GM12878 (cell line): ENCODE measurements at regions of chr9 and their contacts with region 1.

Region 1: GRCh38 chr9:4489919-4490704 is at the start of gene SLC1A1:
- DNase-seq: peak; percentile 55
- ATAC-seq: peak; percentile 76
- H3K4me3 ChIP-seq: peak within 1 kb of the TSS; percentile 99
- H3K27ac ChIP-seq: peak within 1 kb of the TSS; percentile 73
- H3K4me1 ChIP-seq: peaks cover 14% of the 10 kb centered on the region; the same call in 1 of the 2 replicates
- H3K27me3 ChIP-seq: no peaks in the 10 kb centered on the region
- CTCF ChIP-seq: no peak
- EP300 ChIP-seq: 0 out of 4 replicates have a peak, but pooled peaks of 1 of the 2 experiments have one; percentile 14
- POLR2A ChIP-seq: peak; percentile 66
- RAD21 ChIP-seq: 0 out of 2 replicates have a peak, but pooled peaks have one; percentile 7
- polyA plus RNA-seq, gene SLC1A1: 7.3 to 8.7 TPM

Region 2: DNA sequence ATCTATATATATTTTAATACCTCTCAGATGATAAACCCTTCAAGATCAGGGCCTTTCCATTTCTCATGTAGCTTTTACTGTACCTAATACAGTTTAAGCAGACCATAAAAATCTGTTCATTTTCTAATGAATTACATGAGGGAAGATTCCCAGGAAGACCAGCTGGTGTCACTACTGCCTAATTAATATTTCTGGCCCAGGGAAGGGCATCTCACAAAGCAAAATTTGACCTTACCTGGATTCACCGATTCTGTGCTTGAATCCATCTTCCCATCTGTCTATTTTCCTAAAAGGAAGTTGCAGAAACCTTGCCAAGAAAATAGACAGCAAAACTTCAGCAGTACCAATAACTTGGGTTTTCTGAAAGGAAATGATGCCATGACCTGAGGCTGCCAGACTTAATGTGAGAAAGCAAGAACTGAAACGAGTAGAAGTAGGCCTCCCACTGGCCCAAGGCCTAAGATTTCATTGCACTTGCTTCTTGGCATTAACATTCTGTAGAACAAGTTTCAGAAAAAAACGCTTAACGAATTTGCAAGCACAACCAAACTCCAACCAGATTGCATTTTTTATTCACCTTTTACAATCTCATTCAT is 107.3 kb before region 1 on chr9:
- CTCF ChIA-PET with region 1: interaction called, 7 read pairs
- POLR2A ChIA-PET with region 1: no interaction called
- RAD21 ChIA-PET with region 1: no interaction called
- SMC1A ChIA-PET with region 1: interaction called, 3 read pairs
- in situ Hi-C with region 1: no loop called
- intact Hi-C with region 1: loop called (anchors 2 kb)
- DNase-seq: peak; percentile 40
- ATAC-seq: peak; percentile 87
- H3K4me3 ChIP-seq: no peak overlapping the region
- H3K27ac ChIP-seq: no peak overlapping the region
- H3K4me1 ChIP-seq: peaks cover 5% of the 10 kb centered on the region; the same call in 1 of the 2 replicates
- H3K27me3 ChIP-seq: no peaks in the 10 kb centered on the region
- CTCF ChIP-seq: peak; percentile 51 to 73 (median 58); a peak in 5 of 6 replicates
- EP300 ChIP-seq: no peak
- POLR2A ChIP-seq: no peak
- RAD21 ChIP-seq: peak; percentile 87

Region 3: DNA sequence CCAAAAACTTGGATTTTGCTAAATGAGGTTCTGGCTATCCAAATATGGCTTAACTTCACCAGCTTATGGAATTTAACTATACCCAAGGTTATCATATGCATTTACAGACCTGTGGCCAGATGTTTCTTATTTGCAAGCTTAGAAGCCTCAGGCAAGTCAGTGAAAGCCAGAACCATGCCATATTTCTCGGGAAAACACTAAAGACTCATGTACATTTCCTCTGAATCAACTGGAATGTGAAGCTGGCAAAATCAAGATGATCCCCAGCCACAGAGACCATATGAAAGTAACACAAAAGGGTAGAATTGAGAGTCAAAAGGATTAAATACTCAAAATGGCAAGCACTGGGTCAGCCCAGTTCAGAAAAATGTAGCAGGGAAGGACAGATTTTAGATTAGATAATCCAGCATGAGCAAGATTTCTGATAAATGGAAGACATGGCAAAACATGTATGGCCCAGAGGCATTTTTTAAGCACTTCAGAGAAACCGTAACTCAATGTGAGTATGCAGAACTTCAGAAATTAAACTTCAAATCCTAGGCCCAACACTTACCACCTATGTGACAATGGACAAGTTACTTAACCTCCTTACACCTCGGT is 76.2 kb before region 1 on chr9:
- CTCF ChIA-PET with region 1: no interaction called
- POLR2A ChIA-PET with region 1: no interaction called
- RAD21 ChIA-PET with region 1: no interaction called
- SMC1A ChIA-PET with region 1: no interaction called
- in situ Hi-C with region 1: no loop called
- intact Hi-C with region 1: no loop called
- DNase-seq: no peak
- ATAC-seq: no peak
- H3K4me3 ChIP-seq: no peak overlapping the region
- H3K27ac ChIP-seq: no peak overlapping the region
- H3K4me1 ChIP-seq: no peaks in the 10 kb centered on the region
- H3K27me3 ChIP-seq: no peaks in the 10 kb centered on the region
- CTCF ChIP-seq: no peak
- EP300 ChIP-seq: no peak
- POLR2A ChIP-seq: no peak
- RAD21 ChIP-seq: no peak

Region 4: DNA sequence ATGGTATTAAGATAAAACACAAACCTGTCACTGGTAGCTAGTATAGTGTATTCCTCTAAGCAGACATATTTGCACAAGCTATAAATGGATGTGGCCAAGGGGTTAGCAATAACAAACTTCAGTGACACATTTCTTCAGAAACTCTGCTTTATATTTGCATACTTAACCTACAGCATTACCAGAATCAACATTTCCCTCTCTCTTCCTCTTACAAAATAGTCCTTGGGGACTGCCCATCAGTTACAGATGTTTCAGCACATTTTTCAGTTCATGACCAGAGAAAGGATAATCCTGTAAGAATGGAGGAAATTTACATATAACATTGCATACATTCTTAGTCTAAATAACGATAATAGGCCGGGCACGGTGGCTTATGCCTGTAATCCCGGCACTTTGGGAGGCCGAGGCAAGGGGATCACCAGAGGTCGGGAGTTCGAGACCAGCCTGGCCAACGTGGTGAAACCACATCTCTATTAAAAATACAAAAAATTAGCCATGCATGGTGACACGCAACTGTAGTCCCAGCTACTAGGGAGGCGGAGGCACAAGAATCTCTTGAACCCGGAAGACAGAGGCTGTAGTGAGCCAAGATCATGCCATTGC is 25.1 kb before region 1 on chr9:
- CTCF ChIA-PET with region 1: no interaction called
- POLR2A ChIA-PET with region 1: no interaction called
- RAD21 ChIA-PET with region 1: interaction called, 10 read pairs
- SMC1A ChIA-PET with region 1: interaction called, 10 read pairs
- in situ Hi-C with region 1: no loop called
- intact Hi-C with region 1: loop called (anchors 2 kb)
- DNase-seq: peak; percentile 96
- ATAC-seq: peak; percentile 97
- H3K4me3 ChIP-seq: peak overlapping the region; percentile 25; the same call in 1 of the 2 replicates
- H3K27ac ChIP-seq: peak overlapping the region; percentile 98
- H3K4me1 ChIP-seq: peaks cover 21% of the 10 kb centered on the region; the same call in 1 of the 2 replicates
- H3K27me3 ChIP-seq: no peaks in the 10 kb centered on the region
- CTCF ChIP-seq: no peak
- EP300 ChIP-seq: peak; percentile 95 to 98
- POLR2A ChIP-seq: no peak
- RAD21 ChIP-seq: no peak

Region 5: DNA sequence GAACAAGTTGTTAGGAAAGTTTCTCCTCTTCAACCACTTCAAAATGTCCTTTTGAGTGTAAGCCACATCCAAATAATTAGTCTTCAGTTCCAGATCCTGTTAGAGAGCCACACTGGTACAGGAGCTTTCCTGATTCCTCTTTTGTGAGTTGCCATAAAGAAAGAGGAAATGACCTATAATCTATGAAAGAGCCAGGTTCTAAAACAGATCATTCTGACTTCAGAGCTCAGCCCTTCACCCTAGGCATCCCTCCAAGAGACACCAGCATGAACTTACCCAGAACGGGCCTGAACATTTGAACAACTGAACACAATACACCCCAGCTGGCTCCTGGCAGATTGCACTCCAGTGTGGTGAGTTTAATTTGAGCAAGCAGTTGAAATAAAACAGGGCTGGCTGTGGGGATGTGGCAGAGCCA is 25.9 kb after region 1 on chr9:
- CTCF ChIA-PET with region 1: interaction called, 3 read pairs
- POLR2A ChIA-PET with region 1: interaction called, 4 read pairs
- RAD21 ChIA-PET with region 1: interaction called, 10 read pairs
- SMC1A ChIA-PET with region 1: interaction called, 20 read pairs
- in situ Hi-C with region 1: no loop called
- intact Hi-C with region 1: no loop called
- DNase-seq: peak; percentile 43
- ATAC-seq: peak; percentile 69
- H3K4me3 ChIP-seq: no peak overlapping the region
- H3K27ac ChIP-seq: peak overlapping the region; percentile 75
- H3K4me1 ChIP-seq: peaks cover 46% of the 10 kb centered on the region
- H3K27me3 ChIP-seq: no peaks in the 10 kb centered on the region
- CTCF ChIP-seq: no peak
- EP300 ChIP-seq: peak in 1 of 2 experiments; percentile 44; a peak in 1 of 4 replicates
- POLR2A ChIP-seq: no peak
- RAD21 ChIP-seq: no peak

Region 6: DNA sequence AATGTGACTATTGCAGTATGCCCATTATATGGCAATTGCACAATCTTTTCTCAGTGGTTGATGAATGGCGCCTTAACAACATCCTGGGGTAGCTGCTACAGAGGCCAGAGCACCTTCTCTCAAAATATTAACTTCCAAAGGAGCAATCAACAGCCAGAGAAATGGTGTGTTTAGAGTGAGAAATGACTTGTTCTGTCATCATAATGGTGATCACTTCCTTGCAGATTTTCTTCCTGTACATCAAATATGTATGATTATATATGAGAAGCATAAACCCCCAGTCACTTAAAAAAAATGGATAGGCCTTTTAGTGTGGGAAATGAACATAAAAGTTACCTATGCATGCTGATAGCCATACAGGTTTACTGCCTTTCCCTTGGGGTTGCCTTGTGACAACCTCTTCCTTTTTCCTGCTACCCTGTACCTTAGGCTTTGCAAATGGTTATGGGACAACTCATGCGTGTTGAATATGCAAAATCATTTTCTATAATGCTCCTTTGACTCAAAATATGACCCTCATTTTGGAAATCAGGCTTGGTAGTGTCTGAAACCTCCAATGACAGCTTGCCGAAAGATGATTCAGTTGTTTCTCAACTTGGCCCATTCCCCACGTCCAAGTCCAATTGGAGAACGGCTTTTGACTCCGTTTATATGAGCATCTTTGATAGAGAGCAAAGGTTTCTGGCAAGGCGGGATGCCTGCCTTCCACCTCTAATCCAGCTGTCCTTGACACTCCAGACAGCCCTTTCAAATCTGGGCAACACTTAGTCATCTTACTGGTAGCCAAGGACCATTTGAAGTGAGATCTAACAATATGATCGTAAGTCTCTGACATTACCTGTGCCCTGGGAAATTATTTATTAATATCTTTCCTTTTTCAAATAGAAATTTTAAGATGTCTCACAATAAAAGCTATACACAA is 69.4 kb after region 1 on chr9:
- CTCF ChIA-PET with region 1: no interaction called
- POLR2A ChIA-PET with region 1: no interaction called
- RAD21 ChIA-PET with region 1: interaction called, 4 read pairs
- SMC1A ChIA-PET with region 1: no interaction called
- in situ Hi-C with region 1: no loop called
- intact Hi-C with region 1: loop called (anchors 2 kb)
- DNase-seq: peak; percentile 69
- ATAC-seq: peak; percentile 93
- H3K4me3 ChIP-seq: no peak overlapping the region
- H3K27ac ChIP-seq: peak overlapping the region; percentile 81
- H3K4me1 ChIP-seq: peaks cover 15% of the 10 kb centered on the region
- H3K27me3 ChIP-seq: no peaks in the 10 kb centered on the region
- CTCF ChIP-seq: no peak
- EP300 ChIP-seq: no peak
- POLR2A ChIP-seq: no peak
- RAD21 ChIP-seq: no peak

Region 7: DNA sequence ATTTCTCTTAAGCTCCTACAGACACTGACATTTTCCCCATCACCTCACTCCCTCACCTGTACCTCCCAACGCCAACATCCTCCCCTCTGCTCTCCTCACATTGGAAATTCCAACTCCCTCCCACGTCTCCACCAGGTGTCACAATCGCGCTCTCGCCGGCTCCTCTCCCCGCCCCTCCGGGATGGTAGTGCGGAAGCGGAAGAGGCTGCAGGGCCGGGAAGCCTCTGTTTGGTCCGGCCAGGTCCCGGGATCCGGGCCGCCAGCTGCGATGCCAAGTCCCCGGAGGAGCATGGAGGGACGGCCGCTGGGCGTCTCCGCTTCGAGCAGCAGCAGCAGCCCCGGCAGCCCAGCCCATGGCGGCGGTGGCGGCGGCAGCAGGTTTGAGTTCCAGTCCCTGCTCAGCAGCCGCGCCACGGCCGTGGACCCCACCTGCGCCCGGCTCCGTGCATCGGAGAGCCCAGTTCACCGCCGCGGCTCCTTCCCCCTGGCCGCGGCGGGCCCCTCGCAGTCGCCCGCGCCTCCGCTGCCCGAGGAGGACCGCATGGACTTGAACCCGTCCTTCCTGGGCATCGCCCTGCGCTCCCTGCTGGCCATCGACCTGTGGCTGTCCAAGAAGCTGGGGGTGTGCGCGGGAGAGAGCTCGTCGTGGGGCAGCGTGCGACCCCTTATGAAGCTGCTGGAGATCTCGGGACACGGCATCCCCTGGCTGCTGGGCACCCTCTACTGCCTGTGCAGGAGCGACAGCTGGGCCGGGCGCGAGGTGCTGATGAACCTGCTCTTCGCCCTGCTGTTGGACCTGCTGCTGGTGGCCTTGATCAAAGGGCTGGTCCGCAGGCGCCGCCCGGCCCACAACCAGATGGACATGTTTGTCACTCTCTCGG is 172.2 kb after region 1 on chr9 and contains the start of gene PLPP6:
- CTCF ChIA-PET with region 1: no interaction called
- POLR2A ChIA-PET with region 1: no interaction called
- RAD21 ChIA-PET with region 1: no interaction called
- SMC1A ChIA-PET with region 1: no interaction called
- in situ Hi-C with region 1: no loop called
- intact Hi-C with region 1: no loop called
- DNase-seq: peak; percentile 52
- ATAC-seq: peak; percentile 91
- H3K4me3 ChIP-seq: peak within 1 kb of the TSS; percentile 85
- H3K27ac ChIP-seq: peak within 1 kb of the TSS; percentile 68
- H3K4me1 ChIP-seq: peaks cover 21% of the 10 kb centered on the region
- H3K27me3 ChIP-seq: no peaks in the 10 kb centered on the region
- CTCF ChIP-seq: peak; percentile 52 to 85 (median 61)
- EP300 ChIP-seq: no peak
- POLR2A ChIP-seq: peak; percentile 90
- RAD21 ChIP-seq: peak; percentile 65
- polyA plus RNA-seq, gene PLPP6: 1.6 to 3.5 TPM